ENCODE measurements at regions of chr10 and their contacts with region 1.

Region 1: DNA sequence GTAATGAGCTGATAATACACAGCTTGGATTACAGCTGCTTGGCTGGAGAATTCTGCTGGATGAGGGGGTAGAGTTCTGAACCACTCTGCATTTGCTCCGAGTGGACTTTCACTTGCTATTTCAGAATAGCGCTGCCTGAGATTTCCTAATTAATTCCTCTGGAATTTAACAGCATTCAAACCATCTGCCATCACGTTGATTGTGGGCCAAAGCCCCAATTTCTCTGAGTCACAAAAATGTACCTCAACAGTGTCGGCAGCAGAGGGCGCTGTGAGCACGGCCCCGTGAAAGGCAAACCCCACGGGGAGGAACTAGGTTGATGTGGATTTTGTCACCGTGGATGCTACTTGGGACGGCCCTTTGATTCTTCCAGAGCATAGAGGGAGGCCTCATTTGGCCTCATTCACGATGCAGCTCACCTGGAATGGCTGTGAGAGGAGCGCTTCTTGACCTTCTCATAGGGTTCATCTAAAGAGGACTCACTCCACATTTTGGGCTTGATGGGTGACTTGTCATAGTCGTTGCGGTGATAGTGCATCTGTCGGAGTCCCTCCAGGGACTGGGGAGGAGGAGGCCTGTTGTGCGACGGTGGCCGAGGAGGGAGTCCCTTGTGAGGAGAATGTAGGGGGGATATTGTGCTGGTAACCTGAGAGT is 73.3 kb downstream of the PRPF18 start:
- DNase-seq: peak in 4 of 5 donors; percentile 62 to 75 (median 65)
- H3K4me3 ChIP-seq: no peak overlapping the region
- H3K27ac ChIP-seq: no peak overlapping the region
- H3K4me1 ChIP-seq: peaks cover 0 to 5% (median 0%) of the 10 kb centered on the region in 3 donors
- H3K27me3 ChIP-seq: no peaks in the 10 kb centered on the region
- CTCF ChIP-seq: peak; percentile 89

Region 2: DNA sequence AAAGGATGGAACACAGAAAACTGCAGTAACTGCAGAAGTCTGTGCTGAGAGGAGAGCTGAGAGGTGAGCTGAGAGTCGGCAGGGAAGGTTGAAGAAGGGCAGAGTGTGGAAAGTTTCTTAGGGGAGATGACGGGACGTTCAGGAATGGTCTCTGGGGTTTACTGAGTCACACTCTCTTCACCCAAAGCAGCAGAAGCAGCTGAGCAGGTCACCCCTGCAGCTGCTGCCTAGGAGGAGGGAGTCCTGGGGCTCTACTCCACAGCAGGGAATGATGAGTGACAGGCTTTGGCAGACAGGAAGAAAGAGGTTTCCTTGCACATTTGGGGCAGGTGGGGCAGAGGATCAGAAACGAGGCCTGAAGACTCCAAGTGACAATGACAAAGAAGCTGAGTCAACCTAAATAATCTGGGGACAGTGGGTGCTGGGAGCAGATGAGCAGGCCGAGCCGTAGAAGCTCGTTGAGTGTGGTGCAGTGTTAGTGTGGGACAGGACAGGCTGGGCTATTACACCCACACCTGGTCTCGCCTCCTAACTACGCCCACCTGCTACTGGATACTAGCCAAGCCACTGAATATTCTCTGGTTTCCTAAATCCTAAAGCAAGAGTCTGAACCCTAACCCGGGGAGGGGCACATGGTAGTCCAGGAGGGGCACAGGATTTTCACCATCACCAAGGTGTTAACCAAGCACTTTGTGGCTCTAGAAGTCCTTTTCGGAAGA is 156.1 kb before region 1 on chr10:
- intact Hi-C with region 1: no loop called
- DNase-seq: no peak
- H3K4me3 ChIP-seq: no peak overlapping the region
- H3K27ac ChIP-seq: no peak overlapping the region
- H3K4me1 ChIP-seq: peaks cover 0 to 7% (median 0%) of the 10 kb centered on the region in 3 donors
- H3K27me3 ChIP-seq: no peaks in the 10 kb centered on the region
- CTCF ChIP-seq: no peak

Region 3: DNA sequence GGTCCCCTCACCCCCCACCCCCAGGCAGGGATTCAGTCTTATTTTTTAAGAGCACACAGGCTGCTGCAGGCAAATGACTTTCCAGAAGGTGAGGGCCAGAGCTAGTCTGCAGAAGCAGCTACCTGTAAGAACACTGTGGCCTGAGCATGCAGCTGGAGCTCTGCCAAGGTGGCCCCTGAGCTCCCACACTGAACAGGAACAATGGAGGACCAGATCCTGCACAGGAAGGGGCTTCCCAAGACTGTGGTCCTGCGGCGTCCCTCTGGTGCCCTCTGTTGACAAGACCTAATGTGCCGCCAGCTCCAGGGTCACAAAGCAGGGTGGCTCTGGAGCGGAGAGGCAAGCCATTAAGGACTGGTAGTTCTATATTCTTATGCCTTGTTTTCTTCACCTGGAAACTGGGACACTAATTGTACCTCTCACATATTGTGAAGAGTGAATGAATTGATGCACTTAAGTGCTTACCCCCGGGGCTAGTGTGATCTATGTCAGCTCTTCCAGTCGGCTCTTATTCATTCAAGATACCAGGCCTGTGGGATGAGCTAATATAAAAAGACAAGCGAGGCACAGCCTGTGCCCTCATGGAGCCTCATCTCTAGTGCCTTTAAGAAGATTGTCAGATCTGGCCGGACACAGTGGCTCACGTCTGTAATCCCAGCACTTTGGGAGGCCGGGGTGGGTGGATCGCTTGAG is 123.2 kb before region 1 on chr10:
- intact Hi-C with region 1: no loop called
- DNase-seq: peak; percentile 78 to 91 (median 88)
- H3K4me3 ChIP-seq: no peak overlapping the region
- H3K27ac ChIP-seq: no peak overlapping the region
- H3K4me1 ChIP-seq: no peaks in the 10 kb centered on the region
- H3K27me3 ChIP-seq: no peaks in the 10 kb centered on the region
- CTCF ChIP-seq: peak; percentile 66

Region 4: DNA sequence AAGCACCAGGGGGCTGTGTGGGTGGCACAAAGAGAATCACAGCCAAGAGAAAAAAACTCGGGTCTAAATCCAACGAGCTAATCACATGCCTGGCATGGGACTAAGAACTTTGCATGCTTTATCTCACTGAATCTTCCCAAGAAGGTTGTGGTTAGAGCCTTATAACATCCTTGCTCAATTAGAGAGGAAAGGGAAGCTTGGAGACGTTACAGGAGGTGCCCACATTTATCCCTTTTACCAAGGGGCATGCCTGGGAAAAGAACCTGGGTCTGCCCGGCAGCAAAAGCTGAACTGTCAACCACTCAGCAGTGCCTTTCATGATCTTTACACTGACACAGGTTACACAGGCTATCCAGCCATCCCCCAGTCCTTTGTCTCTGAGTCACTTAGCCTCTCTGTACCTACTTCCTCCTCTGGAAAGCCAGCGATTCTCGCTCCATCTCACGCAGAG is 116.9 kb after region 1 on chr10:
- intact Hi-C with region 1: loop called (anchors 5 kb)
- DNase-seq: no peak
- H3K4me3 ChIP-seq: no peak overlapping the region
- H3K27ac ChIP-seq: no peak overlapping the region
- H3K4me1 ChIP-seq: peaks cover 0 to 4% (median 3%) of the 10 kb centered on the region in 3 donors
- H3K27me3 ChIP-seq: no peaks in the 10 kb centered on the region
- CTCF ChIP-seq: no peak

Region 5: DNA sequence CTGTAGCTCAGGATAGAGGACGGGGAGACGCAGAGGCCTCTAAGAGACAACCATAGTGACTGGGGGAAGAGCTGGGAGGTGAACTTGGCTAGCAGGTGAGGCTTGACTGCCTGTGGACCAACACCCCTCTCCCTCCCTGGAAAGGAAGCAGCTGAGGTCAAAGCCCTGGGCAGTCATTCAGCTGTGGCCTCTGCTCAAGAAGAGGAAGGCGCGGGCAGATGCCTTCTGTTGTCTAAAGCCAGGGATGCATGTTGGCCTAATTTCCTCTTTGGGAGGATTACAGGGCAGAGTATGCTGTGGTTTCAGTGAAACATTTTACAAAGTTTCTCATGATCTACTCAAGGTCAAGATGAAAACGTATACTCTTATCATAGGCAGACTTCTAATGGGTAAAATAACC is 253.9 kb after region 1 on chr10:
- intact Hi-C with region 1: no loop called
- DNase-seq: peak in 4 of 5 donors; percentile 38 to 72 (median 56)
- H3K4me3 ChIP-seq: no peak overlapping the region
- H3K27ac ChIP-seq: no peak overlapping the region
- H3K4me1 ChIP-seq: peaks cover 0 to under 1% (median 0%) of the 10 kb centered on the region in 3 donors
- H3K27me3 ChIP-seq: no peaks in the 10 kb centered on the region
- CTCF ChIP-seq: no peak